ENCODE measurements at regions of chr6 and their contacts with region 1.

Region 1: GRCh38 chr6:16136621-16137450 is 8.0 kb downstream of the MYLIP start:
- DNase-seq: peak in 1 of 2 donors; percentile 61
- ATAC-seq: no peak
- H3K4me3 ChIP-seq: peak overlapping the region in 1 of 2 donors; percentile 54
- H3K27ac ChIP-seq: peak overlapping the region in 1 of 2 donors; percentile 43
- H3K4me1 ChIP-seq: peaks cover 10 to 20% of the 10 kb centered on the region in 2 donors
- H3K27me3 ChIP-seq: no peaks in the 10 kb centered on the region

Region 2: DNA sequence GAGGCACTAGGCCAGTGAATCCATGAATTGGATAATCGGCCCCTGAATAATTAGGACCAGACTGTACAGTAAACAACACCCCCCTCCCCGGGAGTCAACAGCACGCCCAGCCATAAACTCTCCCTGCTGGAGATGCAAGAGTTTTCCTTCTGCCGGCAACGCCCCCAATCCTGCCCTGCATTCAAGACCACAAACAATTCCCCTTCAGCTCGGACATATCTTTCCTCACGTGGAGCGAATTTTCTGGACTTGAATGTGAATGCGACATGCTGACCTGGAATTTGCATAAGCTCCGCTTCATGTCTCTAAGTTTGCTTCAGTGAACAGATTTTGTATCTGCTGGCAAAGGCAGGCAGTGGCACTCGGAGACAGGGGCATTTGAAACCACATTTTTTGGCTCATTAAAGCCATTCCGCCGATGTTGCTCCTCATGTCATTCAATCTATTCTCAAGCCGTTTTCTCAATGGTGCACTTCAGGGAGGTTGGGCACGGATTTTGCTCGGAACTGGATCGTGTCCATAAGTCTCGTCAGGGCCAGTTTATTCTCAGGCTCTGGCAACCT is 63.6 kb after region 1 on chr6:
- intact Hi-C with region 1: loop called in 1 of 2 experiments (anchors 5 kb)
- DNase-seq: no peak
- ATAC-seq: peak; percentile 45
- H3K4me3 ChIP-seq: peak overlapping the region; percentile 23 to 30
- H3K27ac ChIP-seq: peak overlapping the region; percentile 49 to 94
- H3K4me1 ChIP-seq: peaks cover 0 to 4% of the 10 kb centered on the region in 2 donors
- H3K27me3 ChIP-seq: no peaks in the 10 kb centered on the region

Measured in aorta (tissue), 5 donors.